SK-N-SH (cell line): ENCODE measurements at regions of chr9 and their contacts with region 1.

Region 1: GRCh38 chr9:9942764-9943424 is 669.9 kb downstream of the PTPRD start:
- DNase-seq: peak; percentile 47
- H3K4me3 ChIP-seq: peak overlapping the region in 1 of 2 experiments; percentile 38; a peak in 1 of 4 replicates
- H3K27ac ChIP-seq: no peak overlapping the region
- H3K4me1 ChIP-seq: no peaks in the 10 kb centered on the region
- H3K27me3 ChIP-seq: no peaks in the 10 kb centered on the region
- CTCF ChIP-seq: peak; percentile 98
- EP300 ChIP-seq: no peak
- RAD21 ChIP-seq: peak; percentile 86

Region 2: DNA sequence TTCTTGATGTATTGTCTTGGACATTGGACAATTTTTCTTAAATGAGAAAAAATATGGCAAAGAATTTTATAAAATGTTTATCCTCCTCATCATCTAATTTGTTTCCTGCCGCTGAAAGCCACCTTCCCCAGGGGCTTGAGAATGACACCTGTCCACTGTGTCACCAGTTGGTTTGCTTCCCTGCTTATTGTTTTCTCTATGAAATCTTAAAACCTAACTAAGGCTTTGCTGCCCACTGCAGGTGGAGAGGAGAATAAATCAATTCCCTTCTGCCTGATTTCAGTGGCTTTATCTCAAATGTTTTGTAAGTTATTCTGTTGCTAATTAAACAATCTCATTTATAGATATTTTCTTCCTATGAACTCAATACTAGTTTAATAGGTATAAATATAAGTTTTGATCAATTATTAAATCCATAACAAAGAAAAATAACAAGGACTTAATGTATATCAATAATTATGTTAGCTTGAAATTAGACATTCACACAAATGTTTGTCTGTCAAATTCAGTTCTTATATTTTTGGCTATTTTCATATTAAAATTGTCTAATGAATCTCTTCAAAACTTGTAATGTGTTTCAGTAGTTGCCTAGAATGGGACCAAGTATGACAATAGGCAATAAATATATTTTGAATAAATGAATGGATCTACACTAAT is 152.6 kb before region 1 on chr9:
- CTCF ChIA-PET with region 1: interaction called, 61 read pairs
- POLR2A ChIA-PET with region 1: no interaction called
- DNase-seq: peak; percentile 43
- H3K4me3 ChIP-seq: peak overlapping the region in 1 of 2 experiments; percentile 37; a peak in 1 of 4 replicates
- H3K27ac ChIP-seq: no peak overlapping the region
- H3K4me1 ChIP-seq: no peaks in the 10 kb centered on the region; a peak in 1 of 4 replicates
- H3K27me3 ChIP-seq: no peaks in the 10 kb centered on the region
- CTCF ChIP-seq: peak; percentile 78
- EP300 ChIP-seq: no peak
- RAD21 ChIP-seq: peak; percentile 89

Region 3: GRCh38 chr9:9912459-9912858 is 30.4 kb before region 1 on chr9:
- CTCF ChIA-PET with region 1: interaction called, 11 read pairs
- POLR2A ChIA-PET with region 1: no interaction called
- DNase-seq: peak; percentile 5
- H3K4me3 ChIP-seq: no peak overlapping the region
- H3K27ac ChIP-seq: no peak overlapping the region
- H3K4me1 ChIP-seq: no peaks in the 10 kb centered on the region
- H3K27me3 ChIP-seq: no peaks in the 10 kb centered on the region
- CTCF ChIP-seq: peak; percentile 45
- EP300 ChIP-seq: no peak
- RAD21 ChIP-seq: peak; percentile 67

Region 4: DNA sequence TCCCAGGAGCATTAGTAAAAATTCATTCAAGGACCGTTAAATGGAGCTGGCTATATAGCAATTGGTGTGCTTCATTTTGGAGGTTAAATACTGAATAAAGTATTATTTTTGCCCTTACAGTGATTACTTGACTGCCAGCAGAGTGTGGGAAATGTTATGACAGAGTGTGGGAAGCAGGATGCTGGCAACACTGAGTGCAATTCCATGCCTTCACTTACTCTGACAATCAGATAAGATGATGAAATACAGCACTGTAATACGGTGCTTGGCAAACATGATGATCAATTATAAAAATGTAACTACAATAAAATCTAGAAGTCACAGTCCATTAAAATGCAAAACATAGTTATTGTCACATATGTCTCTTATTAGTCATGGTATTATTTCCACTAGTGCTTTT is 18.6 kb after region 1 on chr9:
- CTCF ChIA-PET with region 1: interaction called, 14 read pairs
- POLR2A ChIA-PET with region 1: no interaction called
- DNase-seq: peak; percentile 27
- H3K4me3 ChIP-seq: no peak overlapping the region
- H3K27ac ChIP-seq: no peak overlapping the region
- H3K4me1 ChIP-seq: peaks cover 0 to 2% of the 10 kb centered on the region in 2 experiments; a peak in 2 of 4 replicates
- H3K27me3 ChIP-seq: no peaks in the 10 kb centered on the region
- CTCF ChIP-seq: no peak
- EP300 ChIP-seq: no peak
- RAD21 ChIP-seq: no peak